Activated T-helper 1 cell treated with anti-CD3 and anti-CD28 coated beads, Interleukin-12 subunit alpha, Interleukin-12 subunit beta, Interleukin-2, Interleukin-4 antibody, amounts not matched to agents 30 ng/mL and 10 ng/mL and 1 ng/mL, durations not matched to agents 14 hours and 24 hours and 36 hours (primary cell): ENCODE measurements at regions of chr11 and their contacts with region 1.

Region 1: DNA sequence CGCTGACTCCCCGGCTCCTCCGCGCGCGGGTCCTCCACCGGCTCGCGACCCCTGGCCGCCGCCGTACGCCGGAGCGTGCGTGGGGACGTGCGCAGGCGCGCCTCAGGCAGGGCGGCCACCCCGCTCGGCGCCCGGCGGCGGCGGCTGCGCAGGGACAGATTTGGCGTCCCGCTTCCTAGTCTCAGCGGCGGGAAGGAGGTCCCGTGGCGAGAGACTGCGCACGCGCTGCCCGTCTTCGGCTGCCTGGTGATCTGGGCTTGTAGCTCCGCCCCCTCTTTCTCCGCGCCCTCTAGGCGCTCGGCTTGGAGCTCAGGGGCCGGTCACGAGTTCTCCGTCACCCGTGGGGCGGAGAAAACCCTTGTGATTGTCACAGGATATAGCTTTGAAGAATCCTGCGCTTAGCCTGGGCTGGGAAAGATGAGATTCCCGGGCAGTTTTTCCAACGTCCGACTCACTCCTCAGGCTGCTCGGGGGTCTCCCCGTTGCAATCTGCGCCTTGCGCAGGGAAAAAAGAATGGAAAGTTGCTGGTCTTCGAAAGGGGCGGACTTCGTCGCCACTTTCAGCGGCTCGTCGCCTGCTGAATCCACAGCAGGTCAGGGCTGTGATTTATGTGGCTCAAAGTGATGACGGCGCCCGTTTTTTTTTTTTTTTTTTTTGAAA is at the start of gene PATL1:
- DNase-seq: peak; percentile 98
- H3K4me3 Mint-ChIP-seq: peak within 1 kb of the TSS; percentile 94
- H3K27ac Mint-ChIP-seq: peak within 1 kb of the TSS; percentile 97
- H3K4me1 Mint-ChIP-seq: peaks cover 46% of the 10 kb centered on the region
- H3K27me3 Mint-ChIP-seq: peaks cover 2% of the 10 kb centered on the region
- total RNA-seq, gene PATL1: 68.7 and 74.0 TPM in 2 replicates

Region 2: GRCh38 chr11:59142530-59143507 is 526.3 kb before region 1 on chr11 and contains the start of gene FAM111A:
- intact Hi-C with region 1: loop called (anchors 2 kb)
- DNase-seq: peak; percentile 88
- H3K4me3 Mint-ChIP-seq: peak within 1 kb of the TSS; percentile 91
- H3K27ac Mint-ChIP-seq: peak within 1 kb of the TSS; percentile 93
- H3K4me1 Mint-ChIP-seq: peaks cover 62% of the 10 kb centered on the region
- H3K27me3 Mint-ChIP-seq: no peaks in the 10 kb centered on the region
- total RNA-seq, gene FAM111A: 64.8 and 66.4 TPM in 2 replicates

Region 3: DNA sequence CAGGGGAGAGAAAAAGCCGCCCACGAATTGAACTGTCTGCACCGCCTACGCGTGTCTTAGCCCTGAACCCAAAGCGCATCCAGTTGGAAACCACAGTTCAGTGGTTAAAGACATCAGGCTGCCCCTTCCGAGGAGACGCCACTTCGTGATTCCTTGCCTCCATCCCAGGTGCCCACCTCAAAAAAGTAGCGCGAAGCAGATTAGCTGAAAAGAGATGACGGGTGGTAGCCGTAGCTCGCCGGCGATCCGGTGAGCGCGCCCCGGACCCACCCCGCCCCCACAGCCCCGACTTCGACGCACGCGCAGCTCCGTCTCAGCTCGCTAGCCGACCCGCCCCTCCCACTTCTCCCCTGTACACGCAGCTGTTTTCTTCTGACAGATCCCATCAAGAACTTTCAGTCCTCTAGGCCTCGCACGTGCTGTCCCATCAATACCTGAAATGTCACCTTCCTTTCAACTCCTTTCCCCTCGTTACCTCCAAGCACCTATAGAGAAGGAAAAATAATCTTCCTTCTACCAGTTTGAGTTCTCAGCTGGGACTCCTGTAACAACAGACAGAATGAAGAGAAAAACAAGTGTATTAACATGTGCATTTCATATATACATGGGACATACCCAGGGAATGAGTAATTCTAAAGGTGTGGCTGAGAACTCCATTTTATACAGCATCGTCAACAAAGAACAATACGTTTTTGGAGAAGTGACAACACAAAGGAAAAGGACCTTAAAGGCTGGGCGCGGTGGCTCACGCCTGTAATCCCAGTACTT is 108.2 kb before region 1 on chr11:
- intact Hi-C with region 1: loop called (anchors 1 kb)
- DNase-seq: peak; percentile 54
- H3K4me3 Mint-ChIP-seq: peak overlapping the region; percentile 92
- H3K27ac Mint-ChIP-seq: peak overlapping the region; percentile 98
- H3K4me1 Mint-ChIP-seq: peaks cover 48% of the 10 kb centered on the region
- H3K27me3 Mint-ChIP-seq: peaks cover 10% of the 10 kb centered on the region

Region 4: GRCh38 chr11:59647245-59647980 is 21.7 kb before region 1 on chr11:
- intact Hi-C with region 1: loop called (anchors 2 kb)
- DNase-seq: no peak
- H3K4me3 Mint-ChIP-seq: no peak overlapping the region
- H3K27ac Mint-ChIP-seq: no peak overlapping the region
- H3K4me1 Mint-ChIP-seq: no peaks in the 10 kb centered on the region
- H3K27me3 Mint-ChIP-seq: no peaks in the 10 kb centered on the region

Region 5: DNA sequence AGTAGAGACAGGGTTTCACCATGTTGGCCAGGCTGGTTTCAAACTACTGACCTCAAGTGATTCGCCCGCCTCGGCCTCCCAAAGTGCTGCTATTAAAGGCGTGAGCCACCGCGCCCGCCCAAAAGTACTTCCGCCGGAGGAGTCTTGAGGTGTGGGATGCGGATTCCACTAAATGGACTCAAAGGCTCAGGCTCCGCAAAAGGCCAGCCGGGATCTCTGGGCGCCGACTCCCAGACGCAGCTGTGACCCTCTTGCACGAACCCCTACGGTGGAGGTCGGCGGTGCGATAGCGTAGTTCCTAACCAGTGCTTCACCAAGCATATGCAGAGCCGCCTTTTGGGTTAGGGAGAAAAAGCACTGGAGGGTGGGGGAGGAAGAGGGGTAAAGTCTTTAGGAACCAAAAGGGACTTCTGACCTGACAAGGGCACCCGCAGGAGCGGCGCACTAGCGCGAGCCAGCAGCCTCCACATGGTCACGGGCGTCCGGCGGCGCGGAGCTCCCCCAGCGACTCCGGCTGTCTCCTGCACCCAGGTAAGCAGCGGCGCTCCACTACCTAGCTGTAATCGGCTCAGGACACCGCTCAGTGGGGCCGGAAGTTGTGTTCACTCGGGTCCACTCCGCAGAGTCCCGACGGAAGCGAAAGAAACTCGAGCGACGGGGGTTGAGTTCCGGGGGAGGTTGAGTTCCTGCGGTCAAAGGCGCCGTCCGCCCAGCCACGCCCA is 141.3 kb after region 1 on chr11 and contains the start of gene MRPL16:
- intact Hi-C with region 1: loop called (anchors 1 kb)
- DNase-seq: peak; percentile 82
- H3K4me3 Mint-ChIP-seq: peak within 1 kb of the TSS; percentile 96
- H3K27ac Mint-ChIP-seq: peak within 1 kb of the TSS; percentile 91
- H3K4me1 Mint-ChIP-seq: peaks cover 28% of the 10 kb centered on the region
- H3K27me3 Mint-ChIP-seq: no peaks in the 10 kb centered on the region
- total RNA-seq, gene MRPL16: 88.3 and 93.9 TPM in 2 replicates